Activated CD4-positive, alpha-beta memory T cell treated with anti-CD3 and anti-CD28 coated beads, Interleukin-2, amount 10 ng/mL, durations not matched to agents 7 days and 5 days (primary cell): ENCODE measurements at regions of chr18 and their contacts with region 1.

Region 1: GRCh38 chr18:46250084-46250811 is 146.1 kb downstream of the HAUS1 start:
- DNase-seq: peak; percentile 65
- H3K4me3 Mint-ChIP-seq: peak overlapping the region; percentile 76
- H3K27ac Mint-ChIP-seq: peak overlapping the region; percentile 96
- H3K4me1 Mint-ChIP-seq: peaks cover 56% of the 10 kb centered on the region
- H3K27me3 Mint-ChIP-seq: no peaks in the 10 kb centered on the region

Region 2: GRCh38 chr18:46220116-46220515 is 30.1 kb before region 1 on chr18:
- CTCF ChIA-PET with region 1: interaction called, 3 read pairs
- POLR2A ChIA-PET with region 1: interaction called, 10 read pairs
- DNase-seq: no peak
- H3K4me3 Mint-ChIP-seq: no peak overlapping the region
- H3K27ac Mint-ChIP-seq: no peak overlapping the region
- H3K4me1 Mint-ChIP-seq: peaks cover 47% of the 10 kb centered on the region
- H3K27me3 Mint-ChIP-seq: no peaks in the 10 kb centered on the region

Region 3: GRCh38 chr18:46273829-46274228 is 23.6 kb after region 1 on chr18:
- CTCF ChIA-PET with region 1: interaction called, 3 read pairs
- POLR2A ChIA-PET with region 1: interaction called, 10 read pairs
- DNase-seq: no peak
- H3K4me3 Mint-ChIP-seq: no peak overlapping the region
- H3K27ac Mint-ChIP-seq: no peak overlapping the region
- H3K4me1 Mint-ChIP-seq: peaks cover 26% of the 10 kb centered on the region
- H3K27me3 Mint-ChIP-seq: no peaks in the 10 kb centered on the region

Region 4: GRCh38 chr18:46393230-46393629 is 143.0 kb after region 1 on chr18:
- CTCF ChIA-PET with region 1: no interaction called
- POLR2A ChIA-PET with region 1: no interaction called
- DNase-seq: no peak
- H3K4me3 Mint-ChIP-seq: no peak overlapping the region
- H3K27ac Mint-ChIP-seq: no peak overlapping the region
- H3K4me1 Mint-ChIP-seq: peaks cover 19% of the 10 kb centered on the region
- H3K27me3 Mint-ChIP-seq: peaks cover 2% of the 10 kb centered on the region